Mammary epithelial cell (primary cell): ENCODE measurements at regions of chr17 and their contacts with region 1.

Region 1: DNA sequence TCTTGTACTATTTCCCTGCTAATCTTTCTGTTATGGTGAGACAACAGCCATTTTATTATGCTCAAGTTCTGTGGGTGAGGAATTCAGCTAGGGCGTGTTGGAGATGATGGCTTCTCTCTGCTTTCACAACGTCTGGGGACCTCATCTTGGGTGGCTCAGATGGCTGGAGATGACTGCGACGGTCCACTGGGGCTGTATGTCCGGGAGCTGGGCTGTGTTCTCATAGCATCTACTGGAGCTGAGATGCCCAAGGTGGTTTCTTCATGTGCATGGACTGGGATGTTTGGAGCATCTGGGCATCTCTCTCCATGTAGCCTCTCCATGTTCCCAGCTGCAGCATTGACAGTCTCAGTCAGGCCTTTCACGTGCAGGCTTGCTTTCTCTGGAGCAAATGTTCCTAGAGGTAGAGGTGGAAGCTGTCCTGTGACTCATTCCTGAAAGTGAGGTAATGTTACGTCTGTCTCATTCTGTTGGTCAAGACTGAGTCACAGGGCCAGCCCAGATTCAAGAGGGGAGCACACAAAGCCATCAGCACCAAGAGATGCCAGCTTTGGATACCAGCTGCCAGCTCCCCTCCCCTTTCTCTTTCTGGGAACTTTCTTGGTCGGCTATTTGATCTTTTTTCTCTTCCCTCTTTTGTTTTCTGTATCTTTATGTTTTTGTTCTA is 96.2 kb downstream of the RAP1GAP2 start:
- DNase-seq: peak; percentile 98
- H3K4me3 ChIP-seq: no peak overlapping the region
- H3K27ac ChIP-seq: peak overlapping the region; percentile 72
- H3K4me1 ChIP-seq: peaks cover 31% of the 10 kb centered on the region
- H3K27me3 ChIP-seq: no peaks in the 10 kb centered on the region
- CTCF ChIP-seq: no peak

Region 2: DNA sequence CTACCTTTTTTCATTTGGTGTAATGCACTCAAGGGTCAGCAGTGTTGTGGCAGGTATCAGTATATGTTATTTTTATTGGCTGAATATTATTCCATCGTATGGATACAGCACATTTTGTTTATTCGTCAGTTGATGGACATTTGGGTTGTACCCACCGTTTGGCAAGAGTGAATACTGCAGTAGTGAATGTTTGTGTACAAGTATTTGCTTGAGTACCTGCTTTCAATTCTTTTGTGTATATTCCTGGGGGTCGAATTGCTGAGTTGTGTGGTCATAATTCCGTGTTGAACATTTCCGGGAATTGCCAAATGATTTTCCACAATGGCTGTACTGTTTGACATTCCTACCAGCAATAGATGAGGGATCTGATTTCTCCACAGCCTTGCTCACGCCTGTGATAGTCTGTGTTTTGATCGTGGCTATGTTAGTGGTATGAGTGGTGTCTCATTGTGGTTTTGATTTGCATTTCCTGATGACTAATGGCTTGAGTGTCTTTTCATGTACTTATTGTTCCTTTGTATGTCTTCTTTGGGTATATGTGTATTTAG is 62.5 kb after region 1 on chr17:
- CTCF ChIA-PET with region 1: no interaction called
- dilution Hi-C with region 1: no loop called
- in situ Hi-C with region 1: no loop called
- intact Hi-C with region 1: loop called (anchors 1 kb)
- DNase-seq: peak; percentile 98
- H3K4me3 ChIP-seq: peak overlapping the region in 2 of 3 experiments; percentile 5 to 25
- H3K27ac ChIP-seq: peak overlapping the region; percentile 77
- H3K4me1 ChIP-seq: peaks cover 48% of the 10 kb centered on the region
- H3K27me3 ChIP-seq: no peaks in the 10 kb centered on the region
- CTCF ChIP-seq: no peak